ENCODE measurements at regions of chr17 and their contacts with region 1.

Region 1: GRCh38 chr17:2054512-2055291 is at the start of gene HIC1:
- DNase-seq: peak; percentile 95
- H3K4me3 ChIP-seq: peak within 1 kb of the TSS; percentile 27 to 78 (median 58)
- H3K27ac ChIP-seq: peak within 1 kb of the TSS; percentile 57 to 89 (median 87)
- H3K4me1 ChIP-seq: peaks cover 53 to 89% (median 84%) of the 10 kb centered on the region in 6 donors
- H3K27me3 ChIP-seq: peaks cover 0 to 89% (median 47%) of the 10 kb centered on the region in 7 donors
- CTCF ChIP-seq: peak; percentile 62 to 99 (median 98)
- POLR2A ChIP-seq: no peak
- total RNA-seq, gene HIC1: 7.0 to 59.6 (median 23.3) TPM

Region 2: GRCh38 chr17:2244545-2245525 is 190.1 kb after region 1 on chr17:
- intact Hi-C with region 1: loop called (anchors 2 kb)
- DNase-seq: peak; percentile 96
- H3K4me3 ChIP-seq: no peak overlapping the region
- H3K27ac ChIP-seq: peak overlapping the region in 7 of 8 donors; percentile 13 to 49 (median 38)
- H3K4me1 ChIP-seq: peaks cover 0 to 36% (median 16%) of the 10 kb centered on the region in 6 donors
- H3K27me3 ChIP-seq: no peaks in the 10 kb centered on the region
- CTCF ChIP-seq: peak; percentile 90 to 98 (median 96)
- POLR2A ChIP-seq: no peak

Region 3: DNA sequence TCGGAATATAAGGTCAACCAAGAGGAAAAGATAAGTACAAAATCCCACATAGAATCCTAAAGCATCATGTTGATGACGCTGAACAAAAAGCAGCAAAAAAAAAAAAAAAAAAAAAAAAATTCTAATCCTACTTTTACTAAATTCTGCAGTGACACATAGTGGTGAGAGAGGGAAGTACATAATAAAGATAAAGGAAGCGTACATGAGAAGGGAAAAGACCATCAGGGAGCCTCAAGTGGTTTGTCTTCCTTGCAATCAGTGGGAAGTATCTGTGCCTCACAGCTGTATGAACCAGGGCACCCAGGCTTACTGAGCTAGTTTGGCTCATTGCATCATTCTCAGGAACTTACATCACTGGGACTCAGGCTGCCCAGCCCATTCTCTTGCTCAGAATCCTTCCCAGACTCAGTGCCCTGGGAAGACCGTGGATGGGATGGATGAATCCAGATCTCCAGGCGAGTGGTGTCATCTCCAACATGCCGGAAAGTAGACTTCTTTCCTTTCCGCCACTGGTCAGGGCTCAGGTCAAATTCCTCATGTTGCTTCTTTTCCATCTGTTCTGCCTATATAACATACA is 227.7 kb after region 1 on chr17:
- intact Hi-C with region 1: loop called (anchors 10 kb)
- DNase-seq: no peak
- H3K4me3 ChIP-seq: no peak overlapping the region
- H3K27ac ChIP-seq: peak overlapping the region in 2 of 8 donors; percentile 10 to 34
- H3K4me1 ChIP-seq: peaks cover 0 to 12% (median 6%) of the 10 kb centered on the region in 6 donors
- H3K27me3 ChIP-seq: no peaks in the 10 kb centered on the region
- CTCF ChIP-seq: peak; percentile 41 to 83 (median 70)
- POLR2A ChIP-seq: no peak